Aorta (tissue), 5 donors: ENCODE measurements at regions of chr3 and their contacts with region 1.

Region 1: DNA sequence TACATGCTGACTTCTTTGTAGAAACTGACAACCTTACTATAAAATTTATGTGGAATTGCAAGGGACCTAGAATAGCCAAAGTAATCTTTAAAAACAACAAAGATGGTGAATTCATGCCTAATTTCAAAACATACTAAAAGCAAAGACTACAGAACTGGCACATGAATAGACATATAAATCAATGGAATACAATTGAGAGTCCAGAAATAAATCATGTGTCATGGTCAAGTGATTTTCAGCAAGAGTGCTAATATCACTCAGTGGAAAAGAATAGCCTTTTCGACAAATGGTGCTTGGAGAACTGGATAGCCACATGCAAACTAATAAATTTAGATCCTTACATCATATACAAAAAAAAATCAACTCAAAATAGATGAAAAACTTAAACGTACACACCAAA is 8.7 kb downstream of the IMPG2 start:
- DNase-seq: no peak
- ATAC-seq: peak; percentile 57
- H3K4me3 ChIP-seq: no peak overlapping the region
- H3K27ac ChIP-seq: no peak overlapping the region
- H3K4me1 ChIP-seq: no peaks in the 10 kb centered on the region
- H3K27me3 ChIP-seq: no peaks in the 10 kb centered on the region

Region 2: GRCh38 chr3:101163554-101163953 is 148.1 kb before region 1 on chr3:
- intact Hi-C with region 1: no loop called
- DNase-seq: no peak
- ATAC-seq: no peak
- H3K4me3 ChIP-seq: no peak overlapping the region
- H3K27ac ChIP-seq: no peak overlapping the region
- H3K4me1 ChIP-seq: peaks cover 0 to 2% of the 10 kb centered on the region in 2 donors
- H3K27me3 ChIP-seq: no peaks in the 10 kb centered on the region

Region 3: DNA sequence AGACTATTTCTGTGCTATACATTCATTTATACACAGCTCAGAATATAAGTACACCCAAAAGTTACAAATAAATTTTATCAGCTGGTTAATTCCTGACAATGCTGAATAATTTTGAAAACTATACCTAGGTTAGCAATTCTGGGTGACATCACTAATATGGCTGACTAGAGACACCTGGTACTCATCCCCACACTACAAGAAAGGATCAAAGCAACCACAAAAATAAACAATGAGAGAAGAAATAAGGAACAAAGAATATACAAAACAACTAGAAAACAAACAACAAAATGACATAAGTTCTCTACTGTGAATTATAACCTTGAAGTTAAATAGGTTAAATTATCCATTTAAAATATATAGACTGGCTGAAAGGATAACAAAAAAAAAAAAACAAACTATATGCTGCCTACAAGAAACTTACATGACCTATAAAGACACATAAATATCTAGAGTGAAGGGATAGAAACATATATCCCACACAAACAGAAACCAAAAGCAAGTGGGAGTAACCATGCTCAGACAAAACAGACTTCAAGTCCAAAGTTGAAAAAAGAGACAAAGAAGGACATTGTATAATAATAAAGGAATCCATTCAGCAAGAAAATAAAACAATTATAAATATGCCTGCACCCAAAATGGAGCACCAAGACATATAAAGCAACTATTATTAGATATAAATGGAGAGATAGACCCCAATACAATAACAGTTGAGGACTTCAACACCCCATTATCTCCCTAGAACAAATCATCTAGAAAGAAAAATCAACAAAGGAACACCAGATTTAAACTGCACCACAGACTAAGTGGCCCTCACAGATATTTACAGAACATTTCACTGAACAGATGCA is 49.1 kb before region 1 on chr3:
- intact Hi-C with region 1: loop called in 1 of 2 experiments (anchors 5 kb)
- DNase-seq: no peak
- ATAC-seq: no peak
- H3K4me3 ChIP-seq: no peak overlapping the region
- H3K27ac ChIP-seq: no peak overlapping the region
- H3K4me1 ChIP-seq: peaks cover 0 to 2% of the 10 kb centered on the region in 2 donors
- H3K27me3 ChIP-seq: no peaks in the 10 kb centered on the region